Right cardiac atrium (tissue), 5 donors: ENCODE measurements at regions of chr10 and their contacts with region 1.

Region 1: GRCh38 chr10:97731346-97732051 is 5.4 kb upstream of the ZFYVE27 start:
- DNase-seq: peak in 2 of 3 donors; percentile 54 to 71
- ATAC-seq: peak; percentile 65 to 67
- H3K4me3 ChIP-seq: no peak overlapping the region
- H3K27ac ChIP-seq: no peak overlapping the region
- H3K4me1 ChIP-seq: no peaks in the 10 kb centered on the region
- H3K27me3 ChIP-seq: no peaks in the 10 kb centered on the region

Region 2: GRCh38 chr10:97676770-97677581 is 54.5 kb before region 1 on chr10:
- intact Hi-C with region 1: loop called (anchors 2 to 10 kb)
- DNase-seq: peak in 1 of 3 donors; percentile 53
- ATAC-seq: peak; percentile 65 to 68
- H3K4me3 ChIP-seq: no peak overlapping the region
- H3K27ac ChIP-seq: no peak overlapping the region
- H3K4me1 ChIP-seq: no peaks in the 10 kb centered on the region
- H3K27me3 ChIP-seq: no peaks in the 10 kb centered on the region

Region 3: GRCh38 chr10:97701438-97702069 is 29.9 kb before region 1 on chr10:
- intact Hi-C with region 1: loop called in 1 of 4 experiments (anchors 2 kb)
- DNase-seq: no peak
- ATAC-seq: peak; percentile 84 to 85
- H3K4me3 ChIP-seq: no peak overlapping the region
- H3K27ac ChIP-seq: no peak overlapping the region
- H3K4me1 ChIP-seq: no peaks in the 10 kb centered on the region
- H3K27me3 ChIP-seq: no peaks in the 10 kb centered on the region